GM10248 (cell line): ENCODE measurements at regions of chr3 and their contacts with region 1.

Region 1: GRCh38 chr3:149596136-149596770 is 61.6 kb downstream of the WWTR1 start:
- DNase-seq: no peak
- CTCF ChIP-seq: no peak

Region 2: DNA sequence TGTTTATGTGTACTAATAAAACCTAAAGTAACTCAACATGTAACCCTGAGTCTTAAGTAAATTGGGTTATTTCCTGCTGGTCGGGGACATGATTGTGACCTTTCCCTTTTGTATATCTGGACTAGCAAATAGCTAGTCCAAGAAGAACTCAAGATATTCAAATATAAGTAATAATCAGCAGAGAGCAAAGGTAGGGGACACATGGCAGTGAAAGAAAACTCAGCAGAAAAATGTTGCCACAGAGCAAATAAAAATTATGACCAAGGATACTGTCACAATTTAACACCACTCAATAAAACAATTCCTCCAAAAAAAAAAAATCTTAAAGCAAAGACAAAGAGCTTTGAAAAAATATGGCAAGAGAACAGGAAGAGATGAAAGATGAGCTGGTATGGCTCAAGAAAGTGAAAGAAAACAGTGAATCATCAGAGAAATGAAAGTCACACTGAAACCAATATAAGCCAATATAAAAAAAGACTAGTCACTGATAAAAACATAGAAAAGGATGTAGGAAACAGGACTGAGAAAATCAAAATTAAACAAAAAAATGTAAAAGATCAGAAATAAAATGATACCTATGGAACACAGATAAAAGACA is 553.4 kb before region 1 on chr3:
- CTCF ChIA-PET with region 1: no interaction called
- POLR2A ChIA-PET with region 1: no interaction called
- DNase-seq: peak; percentile 41
- CTCF ChIP-seq: no peak

Region 3: GRCh38 chr3:149575961-149576564 is 20.2 kb before region 1 on chr3:
- CTCF ChIA-PET with region 1: interaction called, 26 read pairs
- POLR2A ChIA-PET with region 1: no interaction called
- DNase-seq: no peak
- CTCF ChIP-seq: no peak

Region 4: GRCh38 chr3:149581681-149582370 is 14.4 kb before region 1 on chr3:
- CTCF ChIA-PET with region 1: interaction called, 24 read pairs
- POLR2A ChIA-PET with region 1: no interaction called
- DNase-seq: no peak
- CTCF ChIP-seq: no peak

Region 5: DNA sequence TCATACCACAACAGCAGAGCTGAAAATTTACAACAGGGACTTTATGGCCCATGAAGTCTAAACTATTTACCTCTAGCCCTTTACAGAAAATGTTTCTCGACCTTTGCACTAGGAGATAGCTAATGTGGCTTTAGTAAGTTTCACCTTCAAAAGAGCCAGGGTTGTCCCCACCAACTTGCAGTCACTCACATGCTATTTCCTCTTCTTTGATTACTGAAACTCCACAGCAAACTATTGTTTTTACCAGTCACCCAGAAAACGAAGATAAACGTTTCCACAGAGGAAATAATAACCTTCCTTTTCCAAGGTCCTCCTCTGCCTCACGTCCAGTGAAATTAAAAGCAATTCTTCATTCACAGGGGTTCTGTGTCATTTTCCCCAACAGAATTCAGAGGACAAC is 13.3 kb after region 1 on chr3:
- CTCF ChIA-PET with region 1: interaction called, 19 read pairs
- POLR2A ChIA-PET with region 1: no interaction called
- DNase-seq: peak; percentile 67
- CTCF ChIP-seq: no peak

Region 6: GRCh38 chr3:149752051-149752787 is 156.0 kb after region 1 on chr3 and contains the start of gene COMMD2:
- CTCF ChIA-PET with region 1: no interaction called
- POLR2A ChIA-PET with region 1: no interaction called
- DNase-seq: peak; percentile 84
- CTCF ChIP-seq: no peak